ENCODE measurements at regions of chr2 and their contacts with region 1.

Region 1: DNA sequence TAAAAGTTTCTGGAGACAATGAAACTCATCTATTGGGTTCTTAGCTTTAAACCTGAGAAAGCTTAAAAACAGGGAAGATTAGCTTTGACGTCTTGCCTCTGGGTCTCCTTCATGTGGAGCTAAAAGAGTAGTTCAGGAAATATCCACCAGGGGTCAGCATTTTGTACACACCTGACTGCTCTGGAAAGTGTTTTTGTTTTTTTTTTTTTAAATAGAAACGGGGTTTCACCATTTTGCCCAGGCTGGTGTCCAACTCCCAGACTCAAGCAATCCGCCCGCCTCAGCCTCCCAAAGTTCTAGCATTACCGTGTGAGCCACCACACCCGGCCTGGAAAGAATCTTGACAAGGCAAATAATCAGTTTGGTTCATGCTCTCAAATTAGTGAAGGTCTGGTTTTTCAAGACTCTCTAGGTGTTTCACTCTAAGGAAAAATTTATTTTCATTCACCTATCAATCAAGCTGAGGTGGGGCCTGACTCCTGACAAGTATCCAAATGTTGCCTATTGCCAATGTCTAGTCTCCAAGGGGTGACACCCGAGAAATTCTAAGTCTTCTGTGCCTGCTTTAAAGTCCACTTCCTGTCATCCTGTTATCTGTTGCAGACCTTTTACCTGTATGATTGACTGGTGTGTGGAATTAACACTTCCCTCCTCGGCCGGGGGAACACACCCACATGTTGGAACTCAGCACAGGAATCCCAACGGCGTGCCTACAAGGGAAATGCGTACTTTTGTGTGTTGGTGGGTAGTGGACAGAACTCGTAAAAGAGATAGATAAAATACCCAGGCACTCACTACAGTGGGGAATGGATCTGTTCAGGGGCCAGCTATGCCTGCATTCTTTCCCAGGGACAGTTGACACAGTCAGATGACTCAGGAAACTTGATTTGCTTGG is 11.3 kb downstream of the IL1RN start:
- DNase-seq: no peak
- H3K4me3 ChIP-seq: no peak overlapping the region
- CTCF ChIP-seq: peak; percentile 54

Region 2: GRCh38 chr2:112947374-112947773 is 191.3 kb before region 1 on chr2:
- CTCF ChIA-PET with region 1: no interaction called
- POLR2A ChIA-PET with region 1: no interaction called
- DNase-seq: no peak
- H3K4me3 ChIP-seq: no peak overlapping the region
- CTCF ChIP-seq: no peak

Region 3: DNA sequence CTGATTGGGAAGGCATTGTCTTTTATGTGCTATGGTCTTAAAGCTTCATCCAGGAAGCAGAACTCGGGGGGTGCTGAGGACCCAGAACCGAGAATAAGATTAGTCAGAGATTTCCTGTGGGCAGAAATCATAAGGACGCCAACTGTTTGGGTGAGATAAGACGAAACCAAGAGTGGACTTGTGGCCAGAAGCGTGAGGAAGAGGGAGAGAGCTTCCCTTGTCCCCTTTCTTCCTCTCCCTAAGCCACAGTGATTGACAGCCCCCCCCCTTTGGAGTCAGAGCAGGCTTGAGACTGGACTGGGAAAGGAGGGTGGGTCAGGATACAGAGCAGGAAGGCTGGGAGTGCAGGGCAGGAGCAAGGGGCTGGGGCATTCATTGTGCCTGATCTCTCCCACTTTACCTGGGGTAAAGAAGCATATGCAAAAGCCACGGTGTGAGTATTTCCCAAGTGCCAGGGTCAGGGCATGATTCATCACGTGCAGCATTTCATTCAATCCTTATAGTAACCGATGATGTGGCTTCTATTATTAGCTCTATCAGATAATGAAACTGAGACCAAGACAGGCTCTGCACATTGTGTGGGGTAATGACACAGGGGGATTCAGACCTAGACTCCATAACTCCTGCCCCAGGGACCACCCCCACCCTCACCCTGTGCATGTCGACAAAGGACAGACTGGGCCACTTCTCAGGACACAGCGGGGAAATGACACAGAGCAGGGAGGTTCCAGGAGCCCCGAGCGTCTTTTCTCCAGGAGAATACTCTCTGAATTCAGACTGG is 14.3 kb before region 1 on chr2:
- CTCF ChIA-PET with region 1: interaction called, 226 read pairs
- POLR2A ChIA-PET with region 1: no interaction called
- DNase-seq: no peak
- H3K4me3 ChIP-seq: no peak overlapping the region
- CTCF ChIP-seq: no peak

Region 4: GRCh38 chr2:113167115-113167932 is 28.6 kb after region 1 on chr2:
- CTCF ChIA-PET with region 1: interaction called, 59 read pairs
- POLR2A ChIA-PET with region 1: no interaction called
- DNase-seq: no peak
- H3K4me3 ChIP-seq: no peak overlapping the region
- CTCF ChIP-seq: no peak

Region 5: DNA sequence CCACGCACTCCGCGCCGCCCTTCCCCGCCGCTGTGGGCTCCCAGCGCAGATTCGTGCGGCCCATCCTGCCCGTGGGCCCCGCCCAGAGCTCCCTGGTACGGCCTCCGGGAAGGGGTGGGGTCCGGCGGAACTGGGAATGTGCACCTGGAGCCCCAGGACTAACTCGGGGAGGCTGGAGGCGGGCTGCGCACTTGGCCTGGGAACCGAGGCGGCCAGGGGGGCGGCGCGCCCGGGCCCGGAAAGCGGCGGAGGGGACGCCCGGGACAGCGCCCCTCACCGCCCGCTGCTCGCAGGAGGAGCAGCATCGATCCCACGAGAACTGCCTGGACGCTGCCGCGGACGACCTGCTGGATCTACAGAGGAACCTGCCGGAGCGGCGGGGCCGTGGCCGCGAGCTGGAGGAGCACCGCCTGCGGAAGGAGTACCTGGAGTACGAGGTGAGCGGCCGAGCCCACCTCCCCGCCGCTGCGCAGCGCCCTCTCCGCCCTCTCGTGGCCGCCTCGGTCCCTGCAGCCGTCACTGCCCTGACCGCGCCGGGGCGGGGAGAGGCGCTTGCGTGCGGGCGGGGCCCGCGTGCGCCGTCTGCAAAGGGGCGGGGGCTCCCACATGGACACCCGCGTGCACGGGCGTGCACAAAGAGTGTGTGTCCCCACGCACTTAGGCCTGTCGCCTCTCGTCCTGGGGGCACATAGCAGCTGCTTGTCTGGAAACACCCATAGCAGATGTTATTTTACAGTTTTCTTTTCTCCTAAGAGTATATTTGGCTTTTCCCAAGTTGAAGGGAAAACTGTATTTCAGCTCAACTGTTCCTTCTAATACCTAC is 60.3 kb after region 1 on chr2:
- CTCF ChIA-PET with region 1: interaction called, 191 read pairs
- POLR2A ChIA-PET with region 1: no interaction called
- DNase-seq: no peak
- H3K4me3 ChIP-seq: peak overlapping the region; percentile 83
- CTCF ChIP-seq: peak; percentile 89

Region 6: DNA sequence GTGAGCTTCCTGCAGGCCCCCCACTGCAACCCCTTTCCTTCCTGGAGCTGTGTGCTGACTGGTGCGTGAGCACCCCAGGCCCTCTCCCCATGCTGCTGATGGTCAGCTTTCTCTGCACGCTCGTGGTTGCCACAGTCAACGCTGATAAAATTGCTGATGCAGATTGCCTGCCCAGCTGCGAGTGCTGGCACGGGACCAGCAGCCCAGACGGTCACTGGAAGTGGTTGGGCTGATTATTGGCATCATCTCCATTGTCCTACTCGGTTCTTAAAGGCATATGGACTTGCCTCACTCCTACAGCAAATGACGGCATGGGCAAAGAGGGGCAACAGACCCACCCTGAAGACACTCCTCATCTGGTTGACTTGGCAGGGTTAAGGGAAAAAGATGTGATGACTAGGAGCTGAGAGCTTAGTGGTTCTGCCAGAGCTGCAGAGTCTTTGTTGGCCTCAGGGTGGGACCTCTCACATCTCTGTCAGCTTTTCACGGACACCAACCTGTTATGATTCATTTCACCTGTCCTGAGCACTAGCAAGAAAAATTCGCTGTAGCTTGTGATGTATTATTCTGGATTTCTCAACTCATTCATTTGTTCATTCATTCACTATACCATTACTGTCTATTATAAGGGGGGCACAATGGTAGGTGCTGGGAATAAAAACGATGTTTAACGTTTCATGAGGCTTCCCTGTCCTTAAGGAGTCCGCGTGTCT is 101.6 kb after region 1 on chr2:
- CTCF ChIA-PET with region 1: interaction called, 58 read pairs
- POLR2A ChIA-PET with region 1: no interaction called
- DNase-seq: peak; percentile 58
- H3K4me3 ChIP-seq: peak overlapping the region; percentile 15; the same call in 1 of the 2 replicates
- CTCF ChIP-seq: no peak

Region 7: GRCh38 chr2:113370478-113371091 is 231.9 kb after region 1 on chr2:
- CTCF ChIA-PET with region 1: interaction called, 120 read pairs
- POLR2A ChIA-PET with region 1: no interaction called
- DNase-seq: peak; percentile 34
- H3K4me3 ChIP-seq: no peak overlapping the region
- CTCF ChIP-seq: peak; percentile 60

Region 8: GRCh38 chr2:113390124-113390849 is 251.6 kb after region 1 on chr2:
- CTCF ChIA-PET with region 1: interaction called, 364 read pairs
- POLR2A ChIA-PET with region 1: no interaction called
- DNase-seq: peak; percentile 28
- H3K4me3 ChIP-seq: no peak overlapping the region
- CTCF ChIP-seq: peak; percentile 80

Measured in AG04449 (cell line).